ENCODE measurements at regions of chr2 and their contacts with region 1.

Region 1: GRCh38 chr2:95115418-95115817 is 6.2 kb downstream of the MRPS5 start:
- DNase-seq: peak; percentile 45 to 84 (median 68)
- ATAC-seq: peak; percentile 96 to 99 (median 98)
- H3K4me3 ChIP-seq: no peak overlapping the region
- H3K4me3 Mint-ChIP-seq: no peak overlapping the region
- H3K27ac ChIP-seq: no peak overlapping the region
- H3K27ac Mint-ChIP-seq: no peak overlapping the region
- H3K4me1 ChIP-seq: peaks cover 11 to 12% of the 10 kb centered on the region in 2 experiments
- H3K4me1 Mint-ChIP-seq: peaks cover 43 to 49% (median 46%) of the 10 kb centered on the region in 3 donors
- H3K27me3 ChIP-seq: no peaks in the 10 kb centered on the region
- H3K27me3 Mint-ChIP-seq: no peaks in the 10 kb centered on the region

Region 2: DNA sequence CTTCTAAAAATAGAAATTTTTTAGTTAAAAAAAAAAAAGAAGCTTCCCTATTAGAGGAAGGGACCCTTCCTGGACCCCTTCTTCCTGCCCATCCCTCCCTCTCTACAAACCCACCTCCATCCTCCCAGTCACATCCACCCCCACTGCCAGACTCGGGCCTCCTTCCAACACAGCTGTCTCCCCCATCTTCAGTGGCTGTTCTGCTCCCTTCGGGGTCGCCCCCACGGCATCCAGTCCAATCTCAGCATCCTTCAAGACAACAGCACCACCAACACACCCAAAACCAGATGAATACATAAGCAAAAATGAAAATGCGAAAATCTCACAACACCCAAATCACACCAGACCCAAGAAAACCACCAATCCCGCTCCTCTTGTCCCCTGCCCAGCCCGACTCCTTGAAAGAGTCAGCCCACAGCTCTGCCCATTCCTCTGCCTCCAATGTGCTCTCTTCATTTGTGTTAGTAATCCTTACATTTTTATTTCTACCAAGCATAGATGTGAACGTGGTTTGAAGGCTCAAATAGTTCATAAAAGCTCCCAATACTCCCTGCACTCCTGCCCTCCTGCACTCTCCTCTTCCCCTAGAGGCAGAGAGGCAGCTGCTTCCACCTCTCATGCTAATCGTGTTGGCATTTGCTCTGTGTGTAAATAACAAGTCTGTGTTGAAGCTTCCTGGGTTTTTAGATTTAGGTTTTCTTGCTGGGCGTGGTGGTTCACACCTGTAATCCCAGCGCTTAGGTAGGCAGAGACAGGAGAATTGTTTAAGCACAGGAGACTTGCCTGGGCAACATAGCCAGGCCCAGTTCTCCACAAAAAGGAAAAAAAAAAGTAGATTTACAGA is 53.0 kb before region 1 on chr2:
- CTCF ChIA-PET with region 1: interaction called in 1 of 2 experiments, 19 read pairs
- POLR2A ChIA-PET with region 1: no interaction called
- DNase-seq: peak in 2 of 35 experiments; percentile 5 to 12
- ATAC-seq: peak; percentile 14 to 52 (median 40)
- H3K4me3 ChIP-seq: no peak overlapping the region
- H3K4me3 Mint-ChIP-seq: peak overlapping the region in 1 of 3 donors; percentile 78
- H3K27ac ChIP-seq: peak overlapping the region; percentile 52
- H3K27ac Mint-ChIP-seq: peak overlapping the region; percentile 91 to 93
- H3K4me1 ChIP-seq: peaks cover 18 to 27% of the 10 kb centered on the region in 2 experiments
- H3K4me1 Mint-ChIP-seq: peaks cover 33 to 54% (median 36%) of the 10 kb centered on the region in 3 donors
- H3K27me3 ChIP-seq: no peaks in the 10 kb centered on the region
- H3K27me3 Mint-ChIP-seq: no peaks in the 10 kb centered on the region

Region 3: GRCh38 chr2:95578539-95578938 is 463.1 kb after region 1 on chr2:
- CTCF ChIA-PET with region 1: no interaction called
- POLR2A ChIA-PET with region 1: no interaction called
- DNase-seq: no peak
- ATAC-seq: no peak
- H3K4me3 ChIP-seq: no peak overlapping the region
- H3K4me3 Mint-ChIP-seq: no peak overlapping the region
- H3K27ac ChIP-seq: no peak overlapping the region
- H3K27ac Mint-ChIP-seq: no peak overlapping the region
- H3K4me1 ChIP-seq: no peaks in the 10 kb centered on the region
- H3K4me1 Mint-ChIP-seq: no peaks in the 10 kb centered on the region
- H3K27me3 ChIP-seq: no peaks in the 10 kb centered on the region
- H3K27me3 Mint-ChIP-seq: peaks cover 7 to 9% of the 10 kb centered on the region in 2 donors